Activated CD4-positive, alpha-beta T cell treated with anti-CD3 and anti-CD28 coated beads for 36 hours (primary cell): ENCODE measurements at regions of chr15 and their contacts with region 1.

Region 1: DNA sequence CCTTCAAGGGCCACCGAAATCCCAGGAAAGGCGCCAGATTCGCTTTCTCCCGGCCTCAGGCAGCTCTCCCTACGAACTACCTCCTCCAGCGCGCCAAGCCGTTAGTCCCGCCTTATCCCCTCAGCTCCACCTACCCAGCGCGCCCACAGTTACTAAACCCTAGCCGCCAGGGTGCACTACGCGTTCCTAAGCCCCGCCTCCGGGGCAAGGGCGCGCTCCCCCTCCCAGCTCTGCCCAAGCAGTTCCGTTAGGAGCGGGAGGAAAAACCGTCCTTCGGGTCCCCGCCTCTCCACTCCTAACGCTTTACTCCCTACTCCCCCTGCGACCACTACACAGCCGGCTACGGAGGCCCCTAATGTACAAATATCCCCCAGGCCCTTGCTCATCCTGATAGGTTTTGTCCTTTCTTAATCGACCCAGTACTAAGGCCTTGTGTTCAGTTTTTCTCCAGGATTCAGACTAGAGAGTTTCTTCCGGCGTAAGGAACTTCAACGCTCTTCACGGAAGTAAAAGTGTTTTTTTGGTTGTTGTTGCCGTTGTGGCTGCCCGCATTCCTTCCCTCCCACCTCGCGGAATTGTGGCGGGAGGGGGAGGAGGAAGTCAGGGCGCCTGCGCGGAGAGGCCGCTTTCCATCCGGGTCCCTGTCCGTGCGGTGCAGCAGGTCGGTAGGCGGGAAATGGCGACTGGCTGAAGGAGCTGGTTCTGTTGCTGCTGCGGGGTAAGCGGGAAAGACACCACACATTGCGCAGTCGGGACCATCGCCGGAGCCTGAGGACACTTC is at the start of gene CTDSPL2:
- DNase-seq: peak; percentile 97
- ATAC-seq: peak; percentile 98
- H3K4me3 Mint-ChIP-seq: peak within 1 kb of the TSS; percentile 98
- H3K27ac Mint-ChIP-seq: peak within 1 kb of the TSS; percentile 99
- H3K4me1 Mint-ChIP-seq: peaks cover 36% of the 10 kb centered on the region
- H3K27me3 Mint-ChIP-seq: no peaks in the 10 kb centered on the region
- total RNA-seq, gene CTDSPL2: 80.7 to 107 TPM

Region 2: GRCh38 chr15:44286814-44287452 is 140.2 kb before region 1 on chr15:
- CTCF ChIA-PET with region 1: interaction called, 17 read pairs
- POLR2A ChIA-PET with region 1: interaction called, 26 read pairs
- intact Hi-C with region 1: loop called (anchors 1 kb)
- DNase-seq: no peak
- ATAC-seq: no peak
- H3K4me3 Mint-ChIP-seq: peak overlapping the region; percentile 90
- H3K27ac Mint-ChIP-seq: peak overlapping the region; percentile 97
- H3K4me1 Mint-ChIP-seq: peaks cover 32% of the 10 kb centered on the region
- H3K27me3 Mint-ChIP-seq: peaks cover 2% of the 10 kb centered on the region

Region 3: GRCh38 chr15:44468713-44469385 is 41.7 kb after region 1 on chr15:
- CTCF ChIA-PET with region 1: interaction called, 3 read pairs
- POLR2A ChIA-PET with region 1: no interaction called
- intact Hi-C with region 1: loop called in 1 of 2 experiments (anchors 5 kb)
- DNase-seq: peak; percentile 19
- ATAC-seq: peak; percentile 95
- H3K4me3 Mint-ChIP-seq: no peak overlapping the region
- H3K27ac Mint-ChIP-seq: peak overlapping the region; percentile 80
- H3K4me1 Mint-ChIP-seq: peaks cover 23% of the 10 kb centered on the region
- H3K27me3 Mint-ChIP-seq: no peaks in the 10 kb centered on the region

Region 4: DNA sequence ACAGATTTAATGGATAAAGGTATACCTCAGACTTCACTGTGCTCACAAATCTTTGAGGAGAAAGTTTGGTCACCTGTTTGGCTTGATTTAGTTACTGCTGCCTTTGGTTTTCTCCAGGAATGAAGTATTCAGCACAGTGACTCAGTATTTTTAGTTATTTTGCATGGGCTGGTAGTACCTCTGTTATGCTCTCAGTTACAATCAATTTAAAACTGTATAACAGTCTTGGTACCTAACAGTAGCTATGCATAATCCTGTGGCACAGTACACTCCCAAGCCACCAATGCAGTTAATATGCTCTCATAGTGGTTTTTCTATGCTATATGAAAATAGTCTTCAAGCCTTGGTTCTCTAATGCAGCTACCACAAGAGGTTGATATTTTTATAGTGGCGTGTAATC is 97.9 kb after region 1 on chr15:
- CTCF ChIA-PET with region 1: no interaction called
- POLR2A ChIA-PET with region 1: no interaction called
- intact Hi-C with region 1: no loop called
- DNase-seq: no peak
- ATAC-seq: peak; percentile 16
- H3K4me3 Mint-ChIP-seq: no peak overlapping the region
- H3K27ac Mint-ChIP-seq: no peak overlapping the region
- H3K4me1 Mint-ChIP-seq: peaks cover 3% of the 10 kb centered on the region
- H3K27me3 Mint-ChIP-seq: no peaks in the 10 kb centered on the region

Region 5: GRCh38 chr15:44545913-44546802 is 119.0 kb after region 1 on chr15:
- CTCF ChIA-PET with region 1: interaction called, 6 read pairs
- POLR2A ChIA-PET with region 1: interaction called, 12 read pairs
- intact Hi-C with region 1: no loop called
- DNase-seq: peak; percentile 72
- ATAC-seq: peak; percentile 94
- H3K4me3 Mint-ChIP-seq: peak overlapping the region; percentile 51
- H3K27ac Mint-ChIP-seq: peak overlapping the region; percentile 85
- H3K4me1 Mint-ChIP-seq: peaks cover 58% of the 10 kb centered on the region
- H3K27me3 Mint-ChIP-seq: no peaks in the 10 kb centered on the region

Region 6: DNA sequence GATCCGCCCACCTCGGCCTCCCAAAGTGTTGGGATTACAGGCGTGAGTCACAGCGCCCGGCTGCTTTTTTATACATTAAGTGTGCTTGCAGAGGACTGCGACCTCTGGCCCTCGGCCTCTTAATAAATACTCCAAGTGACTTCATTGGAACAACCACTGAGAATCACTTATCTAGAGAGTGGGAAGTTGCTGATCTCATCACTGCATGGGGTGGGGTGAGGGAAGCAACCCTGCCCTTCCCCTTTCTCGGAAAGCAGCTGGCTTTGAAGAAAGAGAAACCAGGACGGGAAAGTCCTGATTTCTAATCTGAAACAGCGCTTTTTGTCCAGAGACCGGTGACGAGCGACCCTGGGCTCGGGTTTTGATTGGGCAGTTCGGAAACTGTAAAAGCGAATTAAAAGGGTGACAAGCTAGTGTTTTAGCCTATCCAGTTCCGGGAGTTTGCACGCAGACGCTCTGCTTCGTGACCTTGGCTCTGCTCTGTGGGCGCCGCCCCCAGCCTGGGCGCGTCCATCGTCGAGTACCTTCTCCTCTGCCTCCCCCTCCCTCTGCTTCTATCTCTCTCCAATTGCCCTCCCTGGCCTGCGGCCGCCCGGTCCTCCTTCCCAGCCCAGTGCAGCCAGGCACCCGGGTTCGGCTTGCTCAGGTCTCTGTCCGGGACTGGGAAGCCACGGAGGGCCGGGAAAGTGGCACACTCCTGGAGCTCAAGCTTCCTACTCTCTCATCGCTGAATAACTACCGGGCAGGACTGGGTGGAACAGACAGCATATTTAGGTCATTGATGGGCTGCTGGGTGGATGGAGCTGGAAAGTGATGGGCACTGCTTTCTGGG is 301.6 kb after region 1 on chr15:
- CTCF ChIA-PET with region 1: no interaction called
- POLR2A ChIA-PET with region 1: no interaction called
- intact Hi-C with region 1: loop called in 1 of 2 experiments (anchors 1 kb)
- DNase-seq: peak; percentile 96
- ATAC-seq: peak; percentile 78
- H3K4me3 Mint-ChIP-seq: peak overlapping the region; percentile 91
- H3K27ac Mint-ChIP-seq: peak overlapping the region; percentile 99
- H3K4me1 Mint-ChIP-seq: peaks cover 68% of the 10 kb centered on the region
- H3K27me3 Mint-ChIP-seq: no peaks in the 10 kb centered on the region